K562 (cell line): ENCODE measurements at regions of chr15 and their contacts with region 1.

Region 1: DNA sequence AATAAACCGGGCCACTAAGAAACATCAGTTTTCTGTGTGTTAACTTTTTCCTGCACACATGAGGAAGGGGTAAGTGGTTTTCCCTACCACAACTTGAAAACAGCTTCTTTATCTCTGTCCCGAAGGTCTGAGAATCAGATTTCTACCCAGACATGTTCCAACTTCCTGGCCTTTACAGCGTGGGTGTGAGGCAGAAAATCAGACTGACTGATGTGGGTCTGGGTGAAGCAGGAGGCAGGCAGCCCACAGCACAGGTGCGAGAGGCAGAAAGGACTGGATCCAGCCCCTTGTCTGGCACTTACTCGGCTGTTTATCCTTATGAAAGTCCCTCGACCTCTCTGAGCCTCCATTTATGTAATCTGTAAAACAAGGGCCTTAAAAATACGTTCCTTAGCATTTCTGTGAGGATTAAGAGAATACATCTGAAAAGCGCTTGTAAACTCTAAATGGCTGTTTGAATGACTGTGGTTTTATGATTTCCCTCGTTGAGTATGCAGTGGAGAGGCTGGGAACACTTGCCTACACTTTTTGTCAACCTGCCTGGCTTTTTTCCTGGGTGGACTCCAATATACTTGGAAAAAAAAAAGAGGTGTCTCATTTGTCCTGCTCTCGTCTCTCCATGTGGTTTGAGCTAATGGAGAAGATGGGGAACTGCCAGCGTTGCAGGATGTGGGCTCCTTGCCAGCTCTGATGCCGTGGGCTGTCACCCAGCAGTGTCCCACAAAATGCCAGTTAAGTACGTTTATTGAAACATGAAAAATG is 3.1 kb downstream of the AGBL1 start:
- DNase-seq: no peak
- ATAC-seq: no peak
- H3K4me3 ChIP-seq: no peak overlapping the region
- H3K27ac ChIP-seq: no peak overlapping the region
- H3K4me1 ChIP-seq: no peaks in the 10 kb centered on the region
- H3K27me3 ChIP-seq: no peaks in the 10 kb centered on the region
- CTCF ChIP-seq: no peak
- EP300 ChIP-seq: no peak
- POLR2A ChIP-seq: no peak
- RAD21 ChIP-seq: no peak

Region 2: DNA sequence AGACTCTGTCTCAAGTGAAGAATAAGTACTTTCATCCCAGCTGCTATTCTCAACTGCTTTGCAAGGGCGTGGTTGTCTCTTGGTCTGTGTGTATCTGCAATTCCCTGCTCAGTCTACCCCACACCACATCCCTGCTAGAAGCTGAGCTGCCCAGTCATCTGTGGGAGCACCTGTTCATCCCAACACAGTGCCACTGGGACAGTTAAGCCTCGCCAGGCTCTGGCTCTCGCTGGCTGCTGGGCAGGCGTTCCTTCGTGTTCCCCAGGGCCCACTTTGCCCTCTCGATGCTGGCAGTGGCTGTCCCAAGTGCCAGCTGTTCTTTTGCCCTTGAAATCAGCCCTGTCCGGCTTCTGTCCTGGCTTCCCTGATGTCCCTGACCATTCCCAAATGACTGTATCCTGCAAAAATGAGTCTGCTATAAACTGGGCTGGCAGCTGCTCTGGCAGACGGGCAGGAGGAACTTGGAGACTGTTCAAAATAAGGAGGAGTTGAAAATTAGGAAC is 196.4 kb before region 1 on chr15:
- CTCF ChIA-PET with region 1: no interaction called
- POLR2A ChIA-PET with region 1: no interaction called
- in situ Hi-C with region 1: no loop called
- intact Hi-C with region 1: no loop called
- DNase-seq: no peak
- ATAC-seq: no peak
- H3K4me3 ChIP-seq: no peak overlapping the region
- H3K27ac ChIP-seq: no peak overlapping the region
- H3K4me1 ChIP-seq: no peaks in the 10 kb centered on the region
- H3K27me3 ChIP-seq: no peaks in the 10 kb centered on the region
- CTCF ChIP-seq: no peak
- EP300 ChIP-seq: no peak
- POLR2A ChIP-seq: no peak
- RAD21 ChIP-seq: no peak

Region 3: GRCh38 chr15:86055688-86056087 is 27.1 kb before region 1 on chr15:
- CTCF ChIA-PET with region 1: no interaction called
- POLR2A ChIA-PET with region 1: no interaction called
- in situ Hi-C with region 1: no loop called
- intact Hi-C with region 1: loop called (anchors 2 kb)
- DNase-seq: no peak
- ATAC-seq: no peak
- H3K4me3 ChIP-seq: no peak overlapping the region
- H3K27ac ChIP-seq: no peak overlapping the region
- H3K4me1 ChIP-seq: no peaks in the 10 kb centered on the region
- H3K27me3 ChIP-seq: no peaks in the 10 kb centered on the region
- CTCF ChIP-seq: no peak
- EP300 ChIP-seq: no peak
- POLR2A ChIP-seq: no peak
- RAD21 ChIP-seq: no peak